BJ (cell line): ENCODE measurements at regions of chr4 and their contacts with region 1.

Region 1: GRCh38 chr4:118968005-118968404 is 79.4 kb downstream of the SYNPO2 start:
- DNase-seq: peak; percentile 70
- H3K4me3 ChIP-seq: no peak overlapping the region
- H3K27me3 ChIP-seq: no peaks in the 10 kb centered on the region
- CTCF ChIP-seq: no peak

Region 2: GRCh38 chr4:118772081-118772766 is 195.8 kb before region 1 on chr4:
- CTCF ChIA-PET with region 1: interaction called, 11 read pairs
- POLR2A ChIA-PET with region 1: interaction called, 4 read pairs
- DNase-seq: no peak
- H3K4me3 ChIP-seq: no peak overlapping the region
- H3K27me3 ChIP-seq: no peaks in the 10 kb centered on the region
- CTCF ChIP-seq: peak; percentile 46

Region 3: GRCh38 chr4:118888666-118889311 is 79.2 kb before region 1 on chr4 and contains the start of gene SYNPO2:
- CTCF ChIA-PET with region 1: interaction called, 34 read pairs
- POLR2A ChIA-PET with region 1: no interaction called
- DNase-seq: peak; percentile 43
- H3K4me3 ChIP-seq: peak within 1 kb of the TSS; percentile 64
- H3K27me3 ChIP-seq: no peaks in the 10 kb centered on the region
- CTCF ChIP-seq: no peak
- polyA plus RNA-seq, gene SYNPO2: 33.8 and 39.9 TPM in 2 replicates

Region 4: GRCh38 chr4:118941149-118941548 is 26.9 kb before region 1 on chr4:
- CTCF ChIA-PET with region 1: interaction called, 10 read pairs
- POLR2A ChIA-PET with region 1: no interaction called
- DNase-seq: no peak
- H3K4me3 ChIP-seq: no peak overlapping the region
- H3K27me3 ChIP-seq: no peaks in the 10 kb centered on the region
- CTCF ChIP-seq: no peak